Colonic mucosa (tissue), 4 donors: ENCODE measurements at regions of chr6 and their contacts with region 1.

Region 1: GRCh38 chr6:138109042-138109997 is 2.1 kb upstream of the PERP start:
- DNase-seq: peak; percentile 86
- H3K4me3 ChIP-seq: no peak overlapping the region
- H3K27ac ChIP-seq: no peak overlapping the region
- H3K4me1 ChIP-seq: peaks cover 9% of the 10 kb centered on the region
- H3K27me3 ChIP-seq: no peaks in the 10 kb centered on the region
- CTCF ChIP-seq: peak; percentile 99

Region 2: DNA sequence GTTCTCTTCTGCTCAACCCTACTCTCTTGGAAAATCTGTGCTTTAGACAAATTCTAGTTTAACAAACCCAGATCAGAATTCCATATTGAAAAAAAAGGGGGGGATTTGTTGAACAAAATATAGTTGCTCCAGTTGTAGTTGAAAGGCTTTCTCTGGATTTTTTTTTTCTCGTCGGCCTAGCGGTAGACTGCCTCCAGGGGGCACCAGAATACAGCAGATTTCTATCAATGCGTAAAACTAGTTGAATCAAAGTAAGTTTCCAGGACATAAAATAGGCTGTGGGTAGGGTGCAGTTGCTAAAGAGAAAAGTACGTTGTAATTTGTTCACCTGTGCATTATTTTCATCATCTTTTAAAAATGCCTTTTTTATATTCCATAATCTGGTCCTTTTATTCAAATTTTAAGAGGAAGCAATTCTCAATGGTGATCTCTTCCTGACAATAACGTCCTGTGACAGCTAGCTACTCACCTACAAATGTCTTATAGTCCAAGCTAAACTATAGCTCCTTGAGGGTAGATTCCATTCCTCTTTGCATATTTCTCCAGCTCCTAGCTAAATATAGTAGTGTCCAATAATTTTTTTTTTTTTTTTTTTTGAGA is 107.5 kb before region 1 on chr6:
- intact Hi-C with region 1: loop called (anchors 2 kb)
- DNase-seq: peak; percentile 78
- H3K4me3 ChIP-seq: no peak overlapping the region
- H3K27ac ChIP-seq: no peak overlapping the region
- H3K4me1 ChIP-seq: no peaks in the 10 kb centered on the region
- H3K27me3 ChIP-seq: no peaks in the 10 kb centered on the region
- CTCF ChIP-seq: peak; percentile 80

Region 3: GRCh38 chr6:138161338-138162110 is 52.2 kb after region 1 on chr6 and contains the start of gene ARFGEF3:
- intact Hi-C with region 1: no loop called
- DNase-seq: peak; percentile 71
- H3K4me3 ChIP-seq: peak within 1 kb of the TSS; percentile 68
- H3K27ac ChIP-seq: peak within 1 kb of the TSS; percentile 78
- H3K4me1 ChIP-seq: no peaks in the 10 kb centered on the region
- H3K27me3 ChIP-seq: no peaks in the 10 kb centered on the region
- CTCF ChIP-seq: no peak
- total RNA-seq, gene ARFGEF3: 22.2 to 23.8 TPM